Panc1 (cell line): ENCODE measurements at regions of chr7 and their contacts with region 1.

Region 1: DNA sequence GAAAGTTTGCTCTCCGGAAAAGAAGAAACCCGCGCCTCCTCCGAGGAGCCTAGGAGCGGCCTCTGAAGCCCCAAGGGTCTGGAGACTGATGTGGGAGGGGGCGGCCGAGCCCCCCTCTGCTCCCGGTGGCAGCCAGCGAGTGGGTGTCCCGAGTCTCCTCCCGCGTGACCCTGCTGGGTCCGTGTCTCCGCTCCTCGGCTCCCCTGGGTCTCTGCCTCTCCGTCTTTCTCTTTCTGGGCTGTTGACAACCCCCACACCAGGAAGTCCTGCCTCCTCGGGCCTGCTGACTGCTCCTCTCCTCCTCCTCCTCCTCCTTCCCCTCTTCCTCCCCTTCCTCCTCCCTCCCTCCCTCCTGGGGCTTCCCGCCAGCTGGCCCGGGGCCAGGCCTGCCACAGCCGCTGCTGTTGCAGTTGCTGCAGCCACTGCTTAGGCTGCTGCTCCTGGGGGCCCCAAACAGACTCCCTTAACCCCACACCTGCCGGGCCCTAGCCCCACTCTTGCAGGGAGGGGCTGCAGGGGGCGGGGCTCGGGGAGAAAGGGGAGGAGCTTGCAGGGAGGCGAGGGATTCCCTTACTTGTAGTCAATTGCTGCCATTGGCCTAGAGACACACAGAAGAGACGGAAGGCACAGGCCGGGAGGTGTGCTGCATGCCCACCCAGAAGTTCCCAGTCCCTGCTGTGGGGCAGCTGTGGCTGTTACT is at the start of gene TSC22D4:
- DNase-seq: peak; percentile 72
- ATAC-seq: peak; percentile 84
- H3K4me3 ChIP-seq: peak within 1 kb of the TSS; percentile 95 to 97
- H3K27ac ChIP-seq: peak within 1 kb of the TSS; percentile 88
- H3K4me1 ChIP-seq: peaks cover 30% of the 10 kb centered on the region
- H3K27me3 ChIP-seq: no peaks in the 10 kb centered on the region
- CTCF ChIP-seq: no peak
- total RNA-seq, gene TSC22D4: 82.6 TPM

Region 2: GRCh38 chr7:100418930-100419659 is 60.0 kb before region 1 on chr7:
- CTCF ChIA-PET with region 1: no interaction called
- POLR2A ChIA-PET with region 1: no interaction called
- in situ Hi-C with region 1: no loop called
- intact Hi-C with region 1: no loop called
- DNase-seq: no peak
- ATAC-seq: no peak
- H3K4me3 ChIP-seq: no peak overlapping the region
- H3K27ac ChIP-seq: no peak overlapping the region
- H3K4me1 ChIP-seq: peaks cover 7% of the 10 kb centered on the region; the same call in 1 of the 2 replicates
- H3K27me3 ChIP-seq: no peaks in the 10 kb centered on the region
- CTCF ChIP-seq: no peak

Region 3: GRCh38 chr7:100686201-100686821 is 207.2 kb after region 1 on chr7:
- CTCF ChIA-PET with region 1: interaction called, 12 read pairs
- POLR2A ChIA-PET with region 1: no interaction called
- in situ Hi-C with region 1: no loop called
- intact Hi-C with region 1: no loop called
- DNase-seq: no peak
- ATAC-seq: no peak
- H3K4me3 ChIP-seq: no peak overlapping the region
- H3K27ac ChIP-seq: no peak overlapping the region
- H3K4me1 ChIP-seq: peaks cover 15% of the 10 kb centered on the region
- H3K27me3 ChIP-seq: no peaks in the 10 kb centered on the region
- CTCF ChIP-seq: no peak